Psoas muscle (tissue), 8 donors: ENCODE measurements at regions of chr18 and their contacts with region 1.

Region 1: DNA sequence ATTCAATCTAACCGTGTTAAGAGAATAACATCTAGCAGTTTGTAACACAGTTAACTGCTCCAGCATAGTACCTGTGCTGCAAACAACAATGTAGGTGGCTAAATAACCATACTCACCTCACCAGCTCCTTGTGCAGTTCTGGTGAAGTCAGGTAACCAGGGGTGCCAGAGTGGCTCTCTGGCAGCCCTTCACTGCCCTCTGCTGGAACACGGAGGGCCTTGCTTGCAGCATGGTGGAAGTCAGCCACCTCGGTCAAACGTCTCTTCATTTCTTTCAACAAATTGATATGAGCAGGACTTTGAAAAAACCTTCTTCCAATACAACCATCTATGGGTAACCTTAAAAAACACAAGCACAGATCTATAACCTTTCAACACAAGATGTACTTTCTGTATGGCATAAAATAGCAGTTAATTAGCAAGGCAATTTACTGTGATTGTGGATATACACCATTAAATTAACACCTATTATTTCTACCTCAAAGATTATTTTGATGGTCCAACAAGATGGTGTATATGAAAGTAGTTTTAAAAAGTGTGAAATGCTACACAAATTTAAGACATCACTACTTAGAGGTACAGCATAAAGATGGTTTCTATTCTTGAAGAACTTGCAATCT is 56.6 kb downstream of the EPG5 start:
- DNase-seq: peak in 1 of 2 donors; percentile 21
- ATAC-seq: peak in 3 of 4 donors; percentile 53 to 65 (median 59)
- H3K4me3 ChIP-seq: no peak overlapping the region
- H3K27ac ChIP-seq: no peak overlapping the region
- H3K4me1 ChIP-seq: no peaks in the 10 kb centered on the region
- H3K27me3 ChIP-seq: no peaks in the 10 kb centered on the region
- CTCF ChIP-seq: peak; percentile 56

Region 2: GRCh38 chr18:45863469-45863868 is 47.0 kb before region 1 on chr18:
- intact Hi-C with region 1: loop called in 1 of 2 experiments (anchors 5 kb)
- DNase-seq: no peak
- ATAC-seq: no peak
- H3K4me3 ChIP-seq: no peak overlapping the region
- H3K27ac ChIP-seq: no peak overlapping the region
- H3K4me1 ChIP-seq: no peaks in the 10 kb centered on the region
- H3K27me3 ChIP-seq: no peaks in the 10 kb centered on the region
- CTCF ChIP-seq: no peak

Region 3: DNA sequence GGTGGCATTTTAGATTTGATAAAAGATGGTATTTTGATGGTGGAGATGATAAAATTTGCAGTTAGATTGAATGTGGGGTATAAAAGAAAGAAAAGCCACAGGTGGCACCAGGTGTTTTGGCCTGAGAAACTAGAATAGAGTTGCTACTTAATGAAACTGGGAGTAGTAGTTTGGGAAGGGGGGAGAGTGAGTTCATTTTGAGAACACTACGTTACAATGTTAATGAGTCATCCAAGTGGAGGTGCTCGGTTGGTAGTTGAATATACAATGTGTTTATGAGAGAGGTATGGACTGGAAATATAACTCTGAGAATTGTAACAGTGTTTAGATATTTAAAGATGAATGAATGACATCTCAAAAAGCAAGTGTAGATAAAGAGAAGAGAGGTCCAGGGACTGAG is 30.2 kb after region 1 on chr18:
- intact Hi-C with region 1: loop called in 1 of 2 experiments (anchors 5 kb)
- DNase-seq: no peak
- ATAC-seq: no peak
- H3K4me3 ChIP-seq: no peak overlapping the region
- H3K27ac ChIP-seq: no peak overlapping the region
- H3K4me1 ChIP-seq: no peaks in the 10 kb centered on the region
- H3K27me3 ChIP-seq: no peaks in the 10 kb centered on the region
- CTCF ChIP-seq: no peak